ENCODE measurements at regions of chr16 and their contacts with region 1.

Region 1: GRCh38 chr16:86590501-86591144 is 12.3 kb downstream of the FOXL1 start:
- DNase-seq: peak; percentile 79
- H3K4me3 ChIP-seq: no peak overlapping the region
- H3K27ac ChIP-seq: no peak overlapping the region
- H3K4me1 ChIP-seq: peaks cover 15% of the 10 kb centered on the region
- H3K27me3 ChIP-seq: peaks cover 5% of the 10 kb centered on the region
- CTCF ChIP-seq: no peak

Region 2: DNA sequence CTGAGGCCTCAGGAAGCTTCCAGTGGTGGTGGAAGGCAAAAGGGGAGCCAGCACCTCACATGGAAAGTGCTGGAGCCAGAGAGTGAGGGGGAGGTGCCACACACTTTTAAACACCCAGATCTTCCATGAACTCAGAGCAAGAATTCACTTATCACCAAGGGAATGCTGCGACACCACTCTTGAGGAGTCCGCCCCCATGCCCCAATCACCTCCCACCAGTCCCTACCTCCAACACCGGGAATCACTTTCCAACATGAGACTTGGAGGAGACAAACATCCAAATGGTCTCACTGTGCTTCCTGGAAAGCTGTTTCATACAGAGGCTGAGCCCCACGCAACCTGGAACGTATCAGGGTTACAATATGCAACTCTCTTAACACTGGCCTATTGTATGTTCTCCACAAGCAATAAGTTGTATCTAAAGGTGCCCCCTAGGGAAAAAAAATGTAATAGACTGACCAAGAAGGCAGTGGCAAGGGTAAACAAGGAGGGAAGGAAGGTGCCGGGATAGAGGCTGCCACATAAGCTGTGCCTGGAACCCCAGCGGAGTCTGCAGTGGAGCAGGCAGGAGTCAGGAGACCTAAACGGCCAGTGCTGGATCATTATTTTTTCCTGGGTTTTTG is 187.0 kb before region 1 on chr16:
- CTCF ChIA-PET with region 1: no interaction called
- dilution Hi-C with region 1: no loop called
- in situ Hi-C with region 1: no loop called
- intact Hi-C with region 1: no loop called
- DNase-seq: no peak
- H3K4me3 ChIP-seq: no peak overlapping the region
- H3K27ac ChIP-seq: no peak overlapping the region
- H3K4me1 ChIP-seq: no peaks in the 10 kb centered on the region
- H3K27me3 ChIP-seq: peaks cover 1% of the 10 kb centered on the region
- CTCF ChIP-seq: no peak

Region 3: DNA sequence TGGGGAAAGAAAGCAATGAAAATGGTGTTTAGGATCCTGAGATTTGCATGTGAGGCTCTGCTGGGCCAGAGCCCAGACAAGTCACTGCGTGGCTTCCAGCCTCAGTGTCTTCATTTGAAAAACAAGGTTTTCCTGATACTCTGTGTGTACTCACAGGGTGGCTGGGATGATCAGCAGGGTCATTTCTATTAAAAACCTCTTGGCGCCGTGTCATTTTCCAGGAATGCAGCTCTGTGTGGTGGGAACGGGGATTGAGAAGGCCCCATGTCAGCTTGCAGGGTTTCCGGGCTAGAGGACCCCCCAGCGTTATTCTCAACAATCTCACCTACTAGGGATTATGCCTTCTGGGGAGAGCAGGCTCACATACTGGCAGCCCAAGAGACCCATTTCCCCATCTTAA is 61.2 kb after region 1 on chr16:
- CTCF ChIA-PET with region 1: no interaction called
- dilution Hi-C with region 1: no loop called
- in situ Hi-C with region 1: no loop called
- intact Hi-C with region 1: no loop called
- DNase-seq: no peak
- H3K4me3 ChIP-seq: no peak overlapping the region
- H3K27ac ChIP-seq: no peak overlapping the region
- H3K4me1 ChIP-seq: no peaks in the 10 kb centered on the region
- H3K27me3 ChIP-seq: no peaks in the 10 kb centered on the region
- CTCF ChIP-seq: no peak

Region 4: GRCh38 chr16:86669937-86670749 is 79.5 kb after region 1 on chr16:
- CTCF ChIA-PET with region 1: no interaction called
- dilution Hi-C with region 1: loop called (anchors 5 kb)
- in situ Hi-C with region 1: no loop called
- intact Hi-C with region 1: no loop called
- DNase-seq: no peak
- H3K4me3 ChIP-seq: no peak overlapping the region
- H3K27ac ChIP-seq: no peak overlapping the region
- H3K4me1 ChIP-seq: peaks cover 10% of the 10 kb centered on the region
- H3K27me3 ChIP-seq: no peaks in the 10 kb centered on the region
- CTCF ChIP-seq: no peak